ENCODE measurements at regions of chr19 and their contacts with region 1.

Region 1: GRCh38 chr19:38658462-38659306 is 11.2 kb downstream of the ACTN4 start:
- DNase-seq: no peak
- H3K4me3 Mint-ChIP-seq: no peak overlapping the region
- H3K27ac Mint-ChIP-seq: no peak overlapping the region
- H3K4me1 Mint-ChIP-seq: peaks cover 56% of the 10 kb centered on the region
- H3K27me3 Mint-ChIP-seq: no peaks in the 10 kb centered on the region

Region 2: GRCh38 chr19:38683393-38684080 is 24.9 kb after region 1 on chr19:
- intact Hi-C with region 1: loop called (anchors 1 kb)
- DNase-seq: peak; percentile 75
- H3K4me3 Mint-ChIP-seq: peak overlapping the region; percentile 17
- H3K27ac Mint-ChIP-seq: peak overlapping the region; percentile 73
- H3K4me1 Mint-ChIP-seq: peaks cover 82% of the 10 kb centered on the region
- H3K27me3 Mint-ChIP-seq: no peaks in the 10 kb centered on the region

Region 3: DNA sequence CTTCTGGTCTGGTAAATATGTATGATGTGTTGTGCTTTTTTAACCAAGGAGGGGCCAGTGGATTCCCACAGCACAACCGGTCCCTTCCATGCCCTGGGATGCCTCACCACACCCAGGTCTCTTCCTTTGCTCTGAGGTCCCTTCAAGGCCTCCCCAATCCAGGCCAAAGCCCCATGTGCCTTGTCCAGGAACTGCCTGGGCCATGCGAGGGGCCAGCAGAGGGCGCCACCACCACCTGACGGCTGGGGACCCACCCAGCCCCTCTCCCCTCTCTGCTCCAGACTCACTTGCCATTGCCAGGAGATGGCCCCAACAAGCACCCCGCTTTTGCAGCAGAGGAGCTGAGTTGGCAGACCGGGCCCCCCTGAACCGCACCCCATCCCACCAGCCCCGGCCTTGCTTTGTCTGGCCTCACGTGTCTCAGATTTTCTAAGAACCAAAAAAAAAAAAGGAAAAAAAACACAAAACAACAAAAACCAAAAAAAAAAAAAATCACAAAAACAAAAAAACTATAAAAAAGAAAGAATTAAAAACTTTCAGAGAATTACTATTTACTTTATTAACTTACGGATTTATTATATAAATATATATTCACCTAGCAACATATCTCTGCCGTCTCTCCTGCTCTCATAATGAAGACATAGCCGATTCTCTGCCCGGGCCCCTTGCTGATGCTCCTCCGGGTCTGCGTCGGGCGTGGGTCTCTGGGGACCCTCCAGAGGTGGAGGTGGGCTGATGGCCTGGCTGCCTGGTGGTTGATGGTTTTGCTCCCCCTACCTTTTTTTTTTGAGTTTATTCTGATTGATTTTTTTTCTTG is 71.2 kb after region 1 on chr19:
- intact Hi-C with region 1: loop called (anchors 5 kb)
- DNase-seq: peak; percentile 94
- H3K4me3 Mint-ChIP-seq: no peak overlapping the region
- H3K27ac Mint-ChIP-seq: peak overlapping the region; percentile 63
- H3K4me1 Mint-ChIP-seq: peaks cover 31% of the 10 kb centered on the region
- H3K27me3 Mint-ChIP-seq: no peaks in the 10 kb centered on the region

Measured in activated CD4-positive, alpha-beta T cell treated with anti-CD3 and anti-CD28 coated beads, Interleukin-2, amount 10 ng/mL, durations not matched to agents 24 days and 14 days (primary cell).